ENCODE measurements at regions of chr12 and their contacts with region 1.

Region 1: DNA sequence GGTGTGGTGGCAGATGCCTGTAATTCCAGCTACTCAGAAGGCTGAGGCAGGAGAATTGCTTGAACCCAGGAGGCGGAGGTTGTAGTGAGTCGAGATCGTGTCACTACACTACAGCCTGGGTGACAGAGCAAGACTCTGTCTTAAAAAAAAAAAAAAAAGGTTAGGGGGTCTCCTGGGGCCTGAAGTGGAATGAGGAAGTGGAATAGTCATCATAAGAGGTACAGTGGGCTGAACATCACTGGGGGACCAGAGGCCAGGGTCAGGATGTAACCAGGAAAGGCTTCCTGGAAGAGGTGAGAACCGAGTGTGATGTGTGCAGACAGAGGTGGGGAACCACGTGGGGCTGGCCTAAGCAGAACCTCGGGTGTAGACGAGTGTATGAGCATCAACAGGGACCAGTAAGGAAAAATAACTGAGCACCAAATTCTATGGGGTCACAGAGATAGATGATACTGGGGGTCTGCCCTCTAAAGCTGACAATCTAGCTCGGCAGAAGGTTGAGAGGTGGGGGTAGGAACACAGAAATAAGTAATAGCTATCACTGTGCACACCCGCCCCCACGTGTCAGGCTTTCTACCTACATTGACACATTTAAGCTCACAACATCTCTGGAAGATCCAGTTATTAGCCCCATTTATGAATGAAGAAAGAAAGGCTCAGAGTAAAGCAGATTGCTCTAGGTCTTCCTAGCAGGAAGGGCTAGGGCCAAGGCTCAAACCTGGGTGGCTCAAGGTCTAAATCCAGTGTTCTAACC is 5.0 kb upstream of the COX6A1 start:
- DNase-seq: no peak
- H3K4me3 ChIP-seq: no peak overlapping the region
- H3K27ac ChIP-seq: no peak overlapping the region
- H3K4me1 ChIP-seq: no peaks in the 10 kb centered on the region
- H3K27me3 ChIP-seq: no peaks in the 10 kb centered on the region
- CTCF ChIP-seq: no peak

Region 2: DNA sequence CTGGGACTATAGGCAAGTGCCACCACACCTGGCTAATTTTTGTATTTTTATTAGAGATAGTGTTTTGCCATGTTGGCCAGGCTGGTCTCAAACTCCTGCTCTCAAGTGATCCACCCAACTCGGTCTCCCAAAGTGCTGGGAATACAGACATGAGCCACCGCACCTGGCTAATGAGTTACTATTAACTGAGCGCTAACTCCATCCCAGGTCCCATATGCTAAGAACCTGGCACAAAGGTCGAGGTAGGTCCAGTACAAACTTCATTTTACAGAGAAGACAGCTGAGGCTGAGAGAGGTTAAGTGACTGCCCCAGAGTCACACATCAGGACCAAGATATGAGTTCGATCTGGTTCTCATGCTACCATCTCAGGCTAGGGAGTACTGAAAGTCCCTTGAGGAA is 100.9 kb before region 1 on chr12:
- intact Hi-C with region 1: loop called (anchors 2 kb)
- DNase-seq: no peak
- H3K4me3 ChIP-seq: no peak overlapping the region
- H3K27ac ChIP-seq: no peak overlapping the region
- H3K4me1 ChIP-seq: no peaks in the 10 kb centered on the region
- H3K27me3 ChIP-seq: no peaks in the 10 kb centered on the region
- CTCF ChIP-seq: no peak

Region 3: GRCh38 chr12:120356567-120357030 is 76.3 kb before region 1 on chr12:
- intact Hi-C with region 1: loop called (anchors 1 kb)
- DNase-seq: peak in 1 of 2 donors; percentile 78
- H3K4me3 ChIP-seq: peak overlapping the region in 1 of 2 donors; percentile 17
- H3K27ac ChIP-seq: no peak overlapping the region
- H3K4me1 ChIP-seq: peaks cover 0 to 2% of the 10 kb centered on the region in 2 donors
- H3K27me3 ChIP-seq: peaks cover 3% of the 10 kb centered on the region
- CTCF ChIP-seq: peak; percentile 76 to 77 (median 76)